Panc1 (cell line): ENCODE measurements at regions of chr1 and their contacts with region 1.

Region 1: GRCh38 chr1:14923727-14924452 is 229.7 kb upstream of the TMEM51 start:
- DNase-seq: no peak
- ATAC-seq: peak; percentile 81
- H3K4me3 ChIP-seq: peak overlapping the region; percentile 32 to 51
- H3K27ac ChIP-seq: no peak overlapping the region
- H3K4me1 ChIP-seq: peaks cover 7% of the 10 kb centered on the region
- H3K27me3 ChIP-seq: peaks cover 5% of the 10 kb centered on the region
- CTCF ChIP-seq: no peak

Region 2: DNA sequence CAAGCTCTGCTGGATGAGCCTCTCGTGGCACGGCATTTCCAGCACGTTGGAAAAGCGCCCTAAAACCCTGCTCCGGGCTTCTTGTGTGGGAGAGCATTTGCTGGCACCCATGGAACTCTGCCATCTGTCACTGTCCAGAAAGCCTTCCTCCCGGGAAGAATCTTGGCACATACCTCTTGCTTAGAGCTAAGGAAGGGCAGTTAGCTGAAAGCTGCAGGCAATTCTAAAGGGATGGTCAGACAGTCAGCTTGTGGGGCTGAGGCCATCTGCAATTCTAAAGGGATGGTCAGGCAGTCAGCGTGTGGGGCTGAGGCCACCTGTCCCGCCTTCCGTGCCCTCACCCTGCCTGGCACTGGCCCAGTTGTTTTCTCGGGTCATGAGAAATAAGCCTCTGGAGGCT is 90.6 kb after region 1 on chr1:
- CTCF ChIA-PET with region 1: no interaction called
- POLR2A ChIA-PET with region 1: no interaction called
- in situ Hi-C with region 1: no loop called
- intact Hi-C with region 1: loop called (anchors 5 kb)
- DNase-seq: no peak
- ATAC-seq: no peak
- H3K4me3 ChIP-seq: no peak overlapping the region
- H3K27ac ChIP-seq: no peak overlapping the region
- H3K4me1 ChIP-seq: no peaks in the 10 kb centered on the region
- H3K27me3 ChIP-seq: no peaks in the 10 kb centered on the region
- CTCF ChIP-seq: no peak

Region 3: DNA sequence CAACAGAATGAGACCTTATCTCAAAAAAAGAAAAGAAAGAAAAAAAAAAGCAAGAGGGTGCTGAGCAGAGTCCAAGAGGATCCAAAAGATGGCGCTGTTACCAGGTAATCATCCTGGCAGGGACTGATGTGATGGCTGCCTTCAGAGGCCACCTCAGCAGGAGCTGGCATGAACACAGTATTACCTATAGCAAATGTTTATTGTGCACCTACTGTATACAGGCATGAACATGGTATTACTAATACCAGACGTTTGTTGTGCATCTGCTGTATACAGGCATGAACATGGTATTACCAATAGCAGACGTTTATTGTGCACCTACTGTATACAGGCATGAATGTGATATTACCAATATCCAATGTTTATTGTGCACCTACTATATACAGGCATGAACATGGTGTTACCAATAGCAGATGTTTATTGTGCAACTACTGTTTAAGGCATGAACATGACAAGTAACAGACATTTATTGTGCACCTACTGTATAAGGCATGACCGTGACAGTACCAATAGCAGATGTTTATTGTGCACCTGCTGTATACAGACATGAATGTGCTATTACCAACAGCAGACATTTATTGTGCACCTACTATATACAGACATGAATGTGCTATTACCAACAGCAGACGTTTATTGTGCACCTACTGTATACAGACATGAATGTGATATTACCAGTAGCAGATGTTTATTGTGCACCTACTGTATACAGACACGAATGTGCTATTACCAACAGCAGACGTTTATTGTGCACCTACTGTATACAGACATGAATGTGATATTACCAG is 114.5 kb after region 1 on chr1:
- CTCF ChIA-PET with region 1: interaction called, 10 read pairs
- POLR2A ChIA-PET with region 1: no interaction called
- in situ Hi-C with region 1: no loop called
- intact Hi-C with region 1: no loop called
- DNase-seq: peak; percentile 42
- ATAC-seq: peak; percentile 74; the same call in 1 of the 2 replicates
- H3K4me3 ChIP-seq: no peak overlapping the region
- H3K27ac ChIP-seq: no peak overlapping the region
- H3K4me1 ChIP-seq: no peaks in the 10 kb centered on the region
- H3K27me3 ChIP-seq: no peaks in the 10 kb centered on the region
- CTCF ChIP-seq: peak; percentile 80

Region 4: GRCh38 chr1:15062479-15063099 is 138.7 kb after region 1 on chr1:
- CTCF ChIA-PET with region 1: no interaction called
- POLR2A ChIA-PET with region 1: no interaction called
- in situ Hi-C with region 1: no loop called
- intact Hi-C with region 1: no loop called
- DNase-seq: no peak
- ATAC-seq: no peak
- H3K4me3 ChIP-seq: no peak overlapping the region
- H3K27ac ChIP-seq: no peak overlapping the region
- H3K4me1 ChIP-seq: no peaks in the 10 kb centered on the region
- H3K27me3 ChIP-seq: no peaks in the 10 kb centered on the region
- CTCF ChIP-seq: peak; percentile 82